ENCODE measurements at regions of chr18 and their contacts with region 1.

Region 1: DNA sequence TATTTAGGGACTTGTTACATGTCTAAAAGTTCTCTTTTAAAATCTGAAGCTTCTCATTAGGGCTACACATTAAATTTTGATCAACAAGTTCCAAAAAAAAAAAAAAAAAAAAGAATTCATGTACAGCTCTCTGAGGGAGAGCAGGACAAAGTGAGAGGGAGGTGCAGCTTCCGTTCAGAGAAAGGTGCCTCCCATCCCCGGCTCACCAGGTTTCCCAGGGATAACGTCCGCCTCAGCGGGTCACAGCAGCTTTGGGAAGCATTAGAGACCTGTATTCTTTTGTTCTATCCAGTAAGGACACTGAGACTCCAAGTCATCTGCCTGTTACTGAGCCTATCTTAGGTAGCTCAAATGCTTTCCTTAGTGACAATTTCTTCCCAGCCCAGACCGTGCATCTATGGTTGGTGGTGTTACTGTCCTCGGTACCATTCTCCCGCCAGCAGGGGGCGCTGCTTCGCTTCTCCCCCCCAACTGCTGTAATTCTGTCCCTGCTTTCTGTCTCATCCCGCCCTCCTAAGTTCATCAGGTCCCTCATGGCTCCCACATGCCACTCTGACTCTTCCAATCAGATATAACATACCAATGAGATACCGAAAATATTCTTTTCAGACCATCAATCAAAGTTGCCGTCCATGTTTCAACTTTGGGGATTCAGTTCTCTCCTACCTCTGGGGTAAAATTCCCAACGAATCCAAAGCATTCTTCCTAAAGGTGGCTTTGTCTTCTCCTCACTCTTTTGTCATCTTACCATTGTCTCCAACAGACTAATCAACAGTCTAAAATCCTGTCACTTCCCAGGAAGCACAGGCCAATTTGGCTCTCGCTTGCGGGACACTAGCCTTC is 466.5 kb downstream of the METTL4 start:
- DNase-seq: peak; percentile 31
- ATAC-seq: peak; percentile 99
- H3K4me3 ChIP-seq: no peak overlapping the region
- H3K27ac ChIP-seq: no peak overlapping the region
- H3K4me1 ChIP-seq: no peaks in the 10 kb centered on the region
- H3K27me3 ChIP-seq: no peaks in the 10 kb centered on the region
- CTCF ChIP-seq: peak; percentile 48 to 93 (median 81); a peak in 5 of 6 replicates
- POLR2A ChIP-seq: no peak
- RAD21 ChIP-seq: peak; percentile 73

Region 2: DNA sequence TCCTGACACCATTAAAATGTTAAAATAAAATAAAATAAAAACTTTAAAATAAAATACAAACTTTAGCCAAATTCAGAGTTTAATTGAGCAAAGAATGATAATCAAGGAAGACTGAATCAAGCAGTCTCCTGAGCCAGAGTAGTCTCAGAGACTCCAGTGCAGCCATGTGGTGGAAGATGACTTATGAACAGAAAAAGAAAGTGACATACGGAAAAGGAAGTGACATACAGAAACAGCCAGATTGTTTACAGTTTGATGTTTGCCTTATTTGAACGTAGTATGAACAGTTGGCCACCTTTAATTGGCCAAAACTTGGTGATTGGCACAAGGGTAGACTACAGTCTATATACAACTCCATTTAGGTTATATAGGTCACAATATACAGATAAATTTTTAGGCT is 413.0 kb before region 1 on chr18:
- CTCF ChIA-PET with region 1: no interaction called
- POLR2A ChIA-PET with region 1: no interaction called
- RAD21 ChIA-PET with region 1: no interaction called
- intact Hi-C with region 1: no loop called
- DNase-seq: no peak
- ATAC-seq: no peak
- H3K4me3 ChIP-seq: no peak overlapping the region
- H3K27ac ChIP-seq: no peak overlapping the region
- H3K4me1 ChIP-seq: no peaks in the 10 kb centered on the region
- H3K27me3 ChIP-seq: no peaks in the 10 kb centered on the region
- CTCF ChIP-seq: no peak
- POLR2A ChIP-seq: no peak
- RAD21 ChIP-seq: no peak

Region 3: GRCh38 chr18:2121221-2121620 is 16.4 kb after region 1 on chr18:
- CTCF ChIA-PET with region 1: interaction called, 12 read pairs
- POLR2A ChIA-PET with region 1: no interaction called
- RAD21 ChIA-PET with region 1: no interaction called
- intact Hi-C with region 1: no loop called
- DNase-seq: no peak
- ATAC-seq: no peak
- H3K4me3 ChIP-seq: no peak overlapping the region
- H3K27ac ChIP-seq: no peak overlapping the region
- H3K4me1 ChIP-seq: no peaks in the 10 kb centered on the region
- H3K27me3 ChIP-seq: no peaks in the 10 kb centered on the region
- CTCF ChIP-seq: no peak; a peak in 1 of 6 replicates
- POLR2A ChIP-seq: no peak
- RAD21 ChIP-seq: peak; percentile 8; the same call in 1 of the 2 replicates

Region 4: GRCh38 chr18:2293109-2293839 is 188.4 kb after region 1 on chr18:
- CTCF ChIA-PET with region 1: no interaction called
- POLR2A ChIA-PET with region 1: no interaction called
- RAD21 ChIA-PET with region 1: no interaction called
- intact Hi-C with region 1: no loop called
- DNase-seq: no peak
- ATAC-seq: peak; percentile 40
- H3K4me3 ChIP-seq: no peak overlapping the region
- H3K27ac ChIP-seq: no peak overlapping the region
- H3K4me1 ChIP-seq: peaks cover 0 to 6% of the 10 kb centered on the region in 2 experiments; a peak in 1 of 4 replicates
- H3K27me3 ChIP-seq: no peaks in the 10 kb centered on the region
- CTCF ChIP-seq: peak in 1 of 3 experiments; percentile 32; a peak in 1 of 6 replicates
- POLR2A ChIP-seq: no peak
- RAD21 ChIP-seq: no peak

Region 5: GRCh38 chr18:2540575-2540974 is 435.7 kb after region 1 on chr18:
- CTCF ChIA-PET with region 1: interaction called, 27 read pairs
- POLR2A ChIA-PET with region 1: no interaction called
- RAD21 ChIA-PET with region 1: interaction called in 1 of 2 experiments, 3 read pairs
- intact Hi-C with region 1: loop called (anchors 1 kb)
- DNase-seq: no peak
- ATAC-seq: no peak
- H3K4me3 ChIP-seq: no peak overlapping the region
- H3K27ac ChIP-seq: no peak overlapping the region
- H3K4me1 ChIP-seq: no peaks in the 10 kb centered on the region
- H3K27me3 ChIP-seq: no peaks in the 10 kb centered on the region
- CTCF ChIP-seq: no peak
- POLR2A ChIP-seq: no peak
- RAD21 ChIP-seq: no peak

Measured in HCT116 (cell line).